ENCODE measurements at regions of chr10 and their contacts with region 1.

Region 1: DNA sequence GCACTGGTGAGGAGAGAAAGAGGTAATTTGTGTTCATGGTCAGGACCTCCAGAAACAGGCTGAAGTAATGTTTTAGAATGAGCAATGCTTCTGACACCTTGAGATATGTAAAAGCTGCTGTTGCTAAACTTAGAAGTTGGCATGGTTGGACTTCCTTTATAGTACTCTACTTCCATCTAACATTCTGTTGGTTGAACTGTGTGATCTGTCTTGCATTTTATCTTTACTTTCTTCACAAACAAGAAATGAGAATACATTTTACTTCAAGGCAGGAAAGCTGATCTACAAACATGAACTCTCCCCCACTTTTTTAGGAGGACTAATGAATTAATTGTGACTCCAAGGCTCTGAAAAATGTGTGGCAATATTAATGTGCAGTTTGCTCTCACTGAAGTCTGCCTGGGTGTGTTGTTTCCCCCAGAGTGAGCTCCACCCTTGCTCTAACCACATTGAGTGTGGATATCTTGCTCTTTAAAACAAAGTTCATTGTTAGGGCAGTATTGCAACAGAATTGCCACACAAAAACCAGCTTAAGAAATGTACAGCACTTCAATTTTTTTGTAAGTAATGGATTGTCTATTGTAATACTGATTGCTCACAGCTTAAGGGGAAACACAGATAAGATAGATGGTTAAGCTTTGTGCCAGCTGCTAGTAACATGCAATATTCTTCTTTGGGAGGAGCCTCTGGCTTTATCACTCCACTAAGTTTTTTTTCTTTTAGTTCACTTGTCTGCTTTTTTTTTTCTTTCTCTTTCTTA is 69.0 kb downstream of the ADD3 start:
- DNase-seq: no peak
- ATAC-seq: peak; percentile 59
- H3K4me3 Mint-ChIP-seq: peak overlapping the region; percentile 85
- H3K27ac Mint-ChIP-seq: peak overlapping the region; percentile 99
- H3K4me1 Mint-ChIP-seq: peaks cover 84% of the 10 kb centered on the region
- H3K27me3 Mint-ChIP-seq: no peaks in the 10 kb centered on the region
- CTCF ChIP-seq: no peak

Region 2: GRCh38 chr10:110059925-110060324 is 16.8 kb before region 1 on chr10:
- CTCF ChIA-PET with region 1: interaction called, 5 read pairs
- POLR2A ChIA-PET with region 1: interaction called, 12 read pairs
- intact Hi-C with region 1: no loop called
- DNase-seq: no peak
- ATAC-seq: peak; percentile 58
- H3K4me3 Mint-ChIP-seq: no peak overlapping the region
- H3K27ac Mint-ChIP-seq: peak overlapping the region; percentile 90
- H3K4me1 Mint-ChIP-seq: peaks cover 76% of the 10 kb centered on the region
- H3K27me3 Mint-ChIP-seq: no peaks in the 10 kb centered on the region
- CTCF ChIP-seq: no peak

Region 3: GRCh38 chr10:110101464-110102144 is 24.9 kb after region 1 on chr10:
- CTCF ChIA-PET with region 1: interaction called, 3 read pairs
- POLR2A ChIA-PET with region 1: interaction called, 4 read pairs
- intact Hi-C with region 1: loop called (anchors 2 kb)
- DNase-seq: no peak
- ATAC-seq: peak; percentile 55
- H3K4me3 Mint-ChIP-seq: no peak overlapping the region
- H3K27ac Mint-ChIP-seq: peak overlapping the region; percentile 74
- H3K4me1 Mint-ChIP-seq: peaks cover 42% of the 10 kb centered on the region
- H3K27me3 Mint-ChIP-seq: no peaks in the 10 kb centered on the region
- CTCF ChIP-seq: no peak

Measured in activated B cell treated with CpG ODN at 0.5 μM for 24 hours (primary cell).